Activated CD4-positive, alpha-beta memory T cell treated with anti-CD3 and anti-CD28 coated beads for 36 hours (primary cell): ENCODE measurements at regions of chr11 and their contacts with region 1.

Region 1: DNA sequence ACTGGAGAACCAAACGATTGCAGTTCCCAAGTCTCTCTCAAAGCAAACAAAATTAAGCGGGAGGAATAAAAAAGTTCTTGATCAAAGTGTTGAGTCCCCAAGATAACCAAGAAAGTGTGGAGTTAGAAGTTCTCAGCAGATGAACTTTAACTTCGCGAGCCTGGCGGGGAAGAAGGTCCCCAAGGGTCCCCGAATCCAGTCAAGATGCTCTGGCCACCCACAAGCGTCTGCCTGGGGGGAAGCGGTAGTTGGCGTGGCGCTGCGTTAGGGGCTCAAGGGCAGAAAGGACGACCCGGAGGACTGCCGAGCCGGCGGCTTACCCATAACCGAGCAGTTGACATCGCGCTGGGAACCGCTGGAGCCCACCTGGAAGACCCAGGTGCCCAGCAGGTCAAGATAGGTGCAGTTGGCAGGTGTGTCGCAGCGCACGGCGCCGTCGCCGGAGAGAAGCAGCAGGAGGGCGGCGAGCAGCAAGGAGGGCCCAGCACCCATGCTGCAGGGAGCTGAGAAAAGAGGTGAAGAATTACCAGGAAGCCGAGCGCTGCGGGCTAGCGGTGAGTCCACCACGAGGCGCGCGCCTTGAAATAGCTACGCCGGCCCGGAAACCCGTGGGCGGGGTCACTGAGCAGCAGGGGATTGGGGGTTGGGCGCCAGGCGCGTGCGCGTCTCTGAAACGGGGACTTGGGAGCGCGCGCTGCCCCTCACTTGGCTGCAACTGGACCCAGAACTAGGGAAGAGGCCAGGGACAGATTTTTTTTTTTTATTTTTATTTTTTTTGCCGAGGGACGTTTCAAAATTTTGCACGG is at the start of gene CTSC:
- DNase-seq: peak; percentile 95
- H3K4me3 Mint-ChIP-seq: peak within 1 kb of the TSS; percentile 97
- H3K27ac Mint-ChIP-seq: peak within 1 kb of the TSS; percentile 95
- H3K4me1 Mint-ChIP-seq: peaks cover 40% of the 10 kb centered on the region
- H3K27me3 Mint-ChIP-seq: no peaks in the 10 kb centered on the region
- total RNA-seq, gene CTSC: 66.5 to 70.7 TPM

Region 2: DNA sequence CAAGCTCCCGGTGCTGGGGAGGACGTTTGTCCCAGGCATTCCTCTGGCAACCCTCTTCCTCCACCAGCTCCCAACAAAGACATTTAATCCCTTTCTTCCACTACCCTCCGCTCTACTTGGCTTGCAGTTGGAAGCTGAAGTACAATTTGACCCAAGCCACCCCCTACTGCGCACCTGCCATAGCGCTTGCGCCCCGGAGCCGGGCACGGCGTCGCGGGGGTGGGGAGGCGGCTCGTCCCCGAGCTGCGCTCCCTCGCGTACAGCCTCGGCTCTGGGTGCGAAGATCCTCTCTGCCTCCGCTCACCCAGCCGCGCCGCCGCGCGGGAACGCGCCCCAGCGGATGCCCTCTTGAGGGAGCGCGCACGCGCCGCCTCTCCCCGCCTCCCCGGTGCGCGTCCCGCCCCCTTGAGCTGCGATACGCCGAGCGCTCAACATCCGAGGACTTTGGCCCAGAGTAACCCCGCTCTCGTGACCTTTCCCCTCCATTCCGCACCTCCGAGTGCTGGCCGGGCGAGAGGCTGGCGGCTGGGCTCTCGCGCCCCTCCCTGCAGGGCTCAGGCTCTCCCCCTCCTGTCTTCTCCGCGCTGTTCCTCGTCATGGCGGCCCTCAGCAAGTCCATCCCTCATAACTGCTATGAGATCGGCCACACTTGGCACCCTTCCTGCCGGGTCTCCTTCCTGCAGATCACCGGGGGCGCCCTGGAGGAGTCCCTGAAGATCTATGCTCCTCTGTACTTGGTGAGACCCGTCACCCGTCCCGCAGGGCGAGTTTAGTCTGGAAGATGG is 1299.7 kb before region 1 on chr11 and contains the start of gene TMEM135:
- CTCF ChIA-PET with region 1: no interaction called
- POLR2A ChIA-PET with region 1: no interaction called
- intact Hi-C with region 1: loop called (anchors 2 kb)
- DNase-seq: peak; percentile 97
- H3K4me3 Mint-ChIP-seq: peak within 1 kb of the TSS; percentile 91
- H3K27ac Mint-ChIP-seq: peak within 1 kb of the TSS; percentile 87
- H3K4me1 Mint-ChIP-seq: peaks cover 32% of the 10 kb centered on the region
- H3K27me3 Mint-ChIP-seq: no peaks in the 10 kb centered on the region
- total RNA-seq, gene TMEM135: 16.7 to 27.5 TPM

Region 3: GRCh38 chr11:88301488-88302140 is 35.8 kb before region 1 on chr11:
- CTCF ChIA-PET with region 1: interaction called, 3 read pairs
- POLR2A ChIA-PET with region 1: interaction called, 10 read pairs
- intact Hi-C with region 1: loop called (anchors 1 kb)
- DNase-seq: peak; percentile 43
- H3K4me3 Mint-ChIP-seq: peak overlapping the region; percentile 46
- H3K27ac Mint-ChIP-seq: peak overlapping the region; percentile 78
- H3K4me1 Mint-ChIP-seq: peaks cover 32% of the 10 kb centered on the region
- H3K27me3 Mint-ChIP-seq: no peaks in the 10 kb centered on the region

Region 4: GRCh38 chr11:88357323-88358039 is 20.1 kb after region 1 on chr11:
- CTCF ChIA-PET with region 1: interaction called, 11 read pairs
- POLR2A ChIA-PET with region 1: interaction called, 92 read pairs
- intact Hi-C with region 1: loop called (anchors 1 kb)
- DNase-seq: no peak
- H3K4me3 Mint-ChIP-seq: peak overlapping the region; percentile 14
- H3K27ac Mint-ChIP-seq: peak overlapping the region; percentile 67
- H3K4me1 Mint-ChIP-seq: peaks cover 46% of the 10 kb centered on the region
- H3K27me3 Mint-ChIP-seq: no peaks in the 10 kb centered on the region

Region 5: DNA sequence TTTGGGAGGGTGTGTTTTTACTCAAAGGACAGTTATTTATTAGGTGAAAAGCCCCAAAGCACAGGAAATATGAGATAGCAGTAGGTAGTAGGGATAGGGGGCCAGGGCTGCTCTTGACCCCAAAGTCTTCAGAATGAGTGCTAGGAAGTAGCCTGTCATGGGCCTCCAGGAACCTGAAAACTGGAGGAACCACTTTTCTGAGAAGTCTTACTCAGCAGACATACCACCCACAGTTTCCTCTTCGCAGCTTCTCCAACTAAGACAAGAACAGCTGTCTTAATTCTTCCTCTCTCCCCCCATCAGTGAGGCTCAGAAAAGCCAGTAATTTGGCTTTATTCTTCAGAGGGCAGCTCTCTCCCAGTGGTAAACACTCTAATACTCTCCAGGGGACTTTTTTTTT is 84.1 kb after region 1 on chr11:
- CTCF ChIA-PET with region 1: no interaction called
- POLR2A ChIA-PET with region 1: interaction called, 6 read pairs
- intact Hi-C with region 1: loop called (anchors 1 kb)
- DNase-seq: peak; percentile 70
- H3K4me3 Mint-ChIP-seq: no peak overlapping the region
- H3K27ac Mint-ChIP-seq: peak overlapping the region; percentile 70
- H3K4me1 Mint-ChIP-seq: peaks cover 42% of the 10 kb centered on the region
- H3K27me3 Mint-ChIP-seq: no peaks in the 10 kb centered on the region

Region 6: DNA sequence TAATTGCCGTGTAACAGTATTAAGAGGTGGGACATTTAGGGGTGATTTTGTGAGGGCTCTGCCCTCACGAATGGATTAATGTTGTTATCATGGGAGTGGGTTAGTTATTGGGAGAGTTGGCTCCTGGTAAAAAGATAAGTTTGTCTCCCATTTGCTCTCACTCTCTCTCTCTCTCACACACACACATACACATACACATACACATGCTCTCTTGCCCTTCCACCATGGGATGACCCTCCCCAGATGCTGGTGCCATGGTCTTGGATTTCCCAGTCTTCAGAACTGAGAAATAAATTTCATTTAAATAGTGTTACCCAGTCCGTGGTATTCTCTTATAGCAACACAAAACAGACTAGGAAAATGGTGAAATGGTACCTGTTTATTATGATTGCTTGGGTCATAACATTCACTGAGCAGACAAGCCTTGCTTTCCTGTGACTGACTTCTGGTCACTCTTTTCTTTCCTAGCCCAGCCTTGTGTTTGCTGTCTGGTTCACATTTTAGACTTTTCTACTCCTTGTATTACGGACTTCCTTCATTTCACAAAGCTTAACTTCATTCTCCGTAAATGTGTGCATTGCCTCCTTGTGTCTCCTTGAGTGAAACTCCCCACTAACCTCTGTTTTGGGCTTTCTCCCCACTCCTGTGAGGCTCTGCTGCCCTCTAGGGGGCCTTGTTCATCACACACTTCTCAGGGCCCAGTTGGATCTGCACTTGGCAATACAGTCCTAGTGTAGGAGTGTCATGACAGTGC is 206.7 kb after region 1 on chr11:
- CTCF ChIA-PET with region 1: interaction called, 4 read pairs
- POLR2A ChIA-PET with region 1: no interaction called
- intact Hi-C with region 1: loop called (anchors 2 kb)
- DNase-seq: peak; percentile 85
- H3K4me3 Mint-ChIP-seq: no peak overlapping the region
- H3K27ac Mint-ChIP-seq: no peak overlapping the region
- H3K4me1 Mint-ChIP-seq: peaks cover 11% of the 10 kb centered on the region
- H3K27me3 Mint-ChIP-seq: no peaks in the 10 kb centered on the region